ENCODE measurements at regions of chr6 and their contacts with region 1.

Region 1: DNA sequence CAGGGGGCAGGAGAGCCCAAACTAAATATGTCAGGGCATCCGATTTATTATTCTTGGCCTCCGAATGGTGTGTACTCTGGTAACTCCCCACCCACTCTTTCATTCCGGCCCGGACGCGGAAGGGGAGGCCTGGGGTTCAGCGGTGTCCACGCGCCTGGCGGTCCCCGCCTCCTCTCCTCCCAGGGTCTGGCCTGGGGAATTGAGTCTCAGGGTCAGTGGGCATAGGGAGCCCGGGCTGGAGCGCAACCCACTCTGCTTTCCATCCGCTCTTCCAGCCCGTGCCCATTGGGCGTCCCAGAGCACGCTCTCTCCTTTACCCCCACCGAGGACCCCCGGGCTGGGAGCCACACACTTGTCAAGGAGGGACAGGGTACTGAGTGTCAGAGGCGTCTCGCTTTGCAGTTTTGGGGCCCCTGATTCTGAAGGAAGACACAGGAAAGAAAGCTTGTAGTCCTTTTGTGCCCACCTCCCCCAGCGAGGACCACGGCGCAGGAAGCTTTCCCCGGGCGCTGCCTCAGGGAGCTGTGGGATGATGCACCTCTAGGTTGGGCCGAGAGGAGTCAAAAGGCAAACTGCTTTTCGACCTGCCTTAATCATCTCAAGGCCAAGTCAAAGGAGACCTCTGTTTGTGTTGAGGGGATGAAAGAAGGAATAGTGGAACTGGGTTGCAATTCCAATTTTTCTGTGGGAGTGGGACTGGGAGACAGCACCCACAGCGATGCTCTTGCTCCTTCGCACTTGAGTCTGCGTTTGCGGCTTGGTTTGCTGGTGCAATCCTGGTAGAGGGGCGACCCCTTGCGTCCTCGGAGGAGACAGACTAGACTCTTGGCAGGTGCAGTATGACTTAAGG is 2.5 kb downstream of the RSPO3 start:
- DNase-seq: peak; percentile 73
- ATAC-seq: peak; percentile 77 to 84

Region 2: DNA sequence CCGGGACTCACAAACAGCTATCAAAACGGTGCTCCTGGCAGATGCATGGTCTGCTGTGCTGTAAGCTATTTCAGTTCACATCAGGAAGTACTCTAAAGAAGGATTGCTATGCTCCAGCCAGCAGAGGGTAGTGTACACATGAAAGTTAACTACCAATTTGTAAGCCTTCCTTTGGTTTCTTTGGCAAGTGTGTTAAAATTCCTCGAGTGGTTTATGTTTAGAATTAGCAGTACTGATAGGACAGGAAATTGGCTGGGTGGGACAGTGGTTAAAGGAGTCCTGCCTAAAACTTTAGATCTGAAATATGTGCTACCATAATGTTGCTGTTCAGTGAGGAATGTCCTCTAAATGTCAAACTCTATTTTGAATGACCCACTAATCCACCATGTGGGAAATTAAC is 1087.3 kb before region 1 on chr6:
- intact Hi-C with region 1: loop called in 1 of 2 experiments (anchors 10 kb)
- DNase-seq: peak; percentile 24
- ATAC-seq: peak; percentile 87 to 95